Common myeloid progenitor, CD34-positive (primary cell): ENCODE measurements at regions of chr1 and their contacts with region 1.

Region 1: GRCh38 chr1:110619412-110620249 is 13.5 kb upstream of the KCNA2 start:
- DNase-seq: peak; percentile 85 to 94 (median 93)
- H3K4me3 ChIP-seq: peak overlapping the region in 6 of 7 experiments; percentile 46 to 76 (median 62)
- H3K27ac ChIP-seq: peak overlapping the region in 1 of 2 experiments; percentile 12
- H3K4me1 ChIP-seq: peaks cover 4 to 40% (median 36%) of the 10 kb centered on the region in 4 experiments
- H3K27me3 ChIP-seq: peaks cover 0 to 3% (median 1%) of the 10 kb centered on the region in 5 experiments

Region 2: DNA sequence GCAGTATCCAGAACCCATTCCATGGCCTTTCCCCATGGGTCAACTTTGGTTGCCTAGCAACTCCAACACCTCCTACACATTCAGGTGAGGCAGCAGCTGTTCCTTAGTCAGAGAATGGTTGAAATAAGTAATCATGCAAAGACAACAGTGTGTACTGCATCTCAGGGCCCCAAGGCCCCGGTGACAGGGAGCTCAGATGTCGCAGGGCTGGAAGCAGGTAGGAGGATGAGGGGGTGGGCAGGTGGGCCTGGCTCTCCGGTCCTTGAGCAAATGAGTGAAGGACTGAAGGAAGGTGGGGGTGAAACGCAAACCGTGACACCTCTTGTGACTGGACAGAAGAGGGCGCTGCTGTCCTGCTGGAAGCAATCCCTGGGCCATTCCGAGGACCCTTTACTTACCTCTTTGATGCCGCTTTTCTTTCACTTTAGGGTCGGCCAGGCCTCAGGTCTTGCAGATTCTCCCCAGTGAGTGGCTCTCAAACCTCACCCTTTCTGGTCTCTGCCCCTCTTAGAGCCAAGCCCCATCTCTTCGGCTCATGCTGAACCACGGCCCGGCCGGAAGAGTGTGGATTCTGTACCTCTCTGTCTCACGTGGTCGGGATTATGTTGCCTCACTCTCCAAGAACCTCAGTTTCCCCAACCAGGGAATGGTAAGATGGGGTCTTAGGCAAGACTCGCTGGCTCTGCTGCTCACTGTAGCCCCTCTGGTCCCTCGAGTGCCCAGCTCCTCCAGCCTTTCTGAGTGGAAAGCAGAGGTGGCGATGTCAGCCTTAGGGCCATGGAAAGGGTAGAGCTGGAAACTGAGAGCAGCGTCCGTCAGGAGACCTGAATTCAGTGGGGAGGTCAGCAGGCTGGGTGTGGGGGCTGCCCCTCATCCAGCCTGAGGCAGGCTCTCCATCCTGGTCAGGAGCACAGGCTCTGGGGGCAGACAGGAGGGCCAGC is 95.0 kb before region 1 on chr1:
- CTCF ChIA-PET with region 1: interaction called, 15 read pairs
- POLR2A ChIA-PET with region 1: no interaction called
- DNase-seq: peak; percentile 70 to 82 (median 79)
- H3K4me3 ChIP-seq: peak overlapping the region in 1 of 7 experiments; percentile 3
- H3K27ac ChIP-seq: no peak overlapping the region
- H3K4me1 ChIP-seq: peaks cover 0 to 6% (median 2%) of the 10 kb centered on the region in 4 experiments
- H3K27me3 ChIP-seq: peaks cover 0 to 30% (median 14%) of the 10 kb centered on the region in 5 experiments

Region 3: DNA sequence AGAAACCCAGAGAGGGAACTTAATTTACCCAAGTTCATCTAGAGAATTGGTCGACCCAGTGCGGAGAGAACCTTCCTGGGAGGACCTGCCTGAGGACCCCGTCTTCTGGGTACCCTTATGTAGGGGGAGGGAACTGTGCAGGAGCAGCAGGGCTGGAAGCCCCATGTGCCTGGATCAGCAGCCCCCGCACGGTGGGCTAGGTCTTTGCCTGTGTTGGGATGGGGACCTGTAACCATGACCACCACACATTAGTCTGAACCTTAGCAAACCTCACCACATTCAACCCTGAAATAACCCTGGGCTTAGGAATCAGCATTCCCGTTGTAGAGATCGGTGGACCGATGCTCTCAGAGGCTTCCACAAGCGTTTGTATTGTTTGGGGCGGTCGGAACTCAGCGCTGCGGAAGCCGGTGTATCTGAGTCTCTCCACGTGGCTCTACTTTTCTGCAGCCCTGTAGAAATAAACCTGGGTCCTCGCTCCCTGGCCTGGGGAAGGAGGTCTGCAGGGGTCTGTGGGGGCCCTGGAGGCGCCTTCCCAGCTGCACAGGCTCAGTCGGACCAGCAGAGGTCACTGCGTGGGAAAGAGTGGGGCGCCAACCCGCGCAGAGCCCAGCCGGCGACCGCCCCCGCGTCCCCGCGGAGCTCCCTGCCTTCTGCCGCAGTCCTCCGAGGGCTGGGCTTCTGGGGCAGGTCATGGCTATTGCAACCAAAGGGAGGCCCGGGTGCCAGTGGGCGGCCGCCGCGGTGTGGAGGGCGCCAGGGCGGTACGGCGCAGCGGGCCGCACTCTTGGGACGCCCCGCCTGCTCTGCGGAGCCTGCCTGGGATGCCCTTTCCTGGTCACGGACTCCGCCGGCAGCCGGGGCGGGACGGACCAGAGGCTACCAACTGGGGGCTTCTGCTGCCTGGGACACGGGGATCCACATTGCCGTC is 64.5 kb before region 1 on chr1:
- CTCF ChIA-PET with region 1: interaction called, 15 read pairs
- POLR2A ChIA-PET with region 1: no interaction called
- DNase-seq: peak; percentile 50 to 73 (median 70)
- H3K4me3 ChIP-seq: peak overlapping the region in 5 of 7 experiments; percentile 9 to 66 (median 52)
- H3K27ac ChIP-seq: no peak overlapping the region
- H3K4me1 ChIP-seq: peaks cover 0 to 11% (median 8%) of the 10 kb centered on the region in 4 experiments
- H3K27me3 ChIP-seq: peaks cover 5 to 69% (median 37%) of the 10 kb centered on the region in 5 experiments

Region 4: GRCh38 chr1:110605901-110606656 is 13.6 kb before region 1 on chr1 and contains the start of gene KCNA2:
- CTCF ChIA-PET with region 1: interaction called, 35 read pairs
- POLR2A ChIA-PET with region 1: no interaction called
- DNase-seq: peak in 1 of 3 donors; percentile 50
- H3K4me3 ChIP-seq: peak within 1 kb of the TSS; percentile 24 to 74 (median 55)
- H3K27ac ChIP-seq: no peak within 1 kb of the TSS
- H3K4me1 ChIP-seq: peaks cover 0 to 22% (median 17%) of the 10 kb centered on the region in 4 experiments
- H3K27me3 ChIP-seq: peaks cover 0 to 71% (median 52%) of the 10 kb centered on the region in 5 experiments

Region 5: GRCh38 chr1:110630839-110631663 is 11.4 kb after region 1 on chr1:
- CTCF ChIA-PET with region 1: interaction called, 24 read pairs
- POLR2A ChIA-PET with region 1: no interaction called
- DNase-seq: peak; percentile 69 to 82 (median 80)
- H3K4me3 ChIP-seq: peak overlapping the region in 1 of 7 experiments; percentile 19
- H3K27ac ChIP-seq: no peak overlapping the region
- H3K4me1 ChIP-seq: peaks cover 0 to 18% (median 12%) of the 10 kb centered on the region in 4 experiments
- H3K27me3 ChIP-seq: no peaks in the 10 kb centered on the region

Region 6: GRCh38 chr1:110766025-110766647 is 146.5 kb after region 1 on chr1:
- CTCF ChIA-PET with region 1: interaction called, 57 read pairs
- POLR2A ChIA-PET with region 1: no interaction called
- DNase-seq: peak; percentile 69 to 87 (median 84)
- H3K4me3 ChIP-seq: no peak overlapping the region
- H3K27ac ChIP-seq: no peak overlapping the region
- H3K4me1 ChIP-seq: peaks cover 0 to 2% (median 0%) of the 10 kb centered on the region in 4 experiments
- H3K27me3 ChIP-seq: peaks cover 0 to 18% (median 6%) of the 10 kb centered on the region in 5 experiments